Calu3 (cell line): ENCODE measurements at regions of chr1 and their contacts with region 1.

Region 1: DNA sequence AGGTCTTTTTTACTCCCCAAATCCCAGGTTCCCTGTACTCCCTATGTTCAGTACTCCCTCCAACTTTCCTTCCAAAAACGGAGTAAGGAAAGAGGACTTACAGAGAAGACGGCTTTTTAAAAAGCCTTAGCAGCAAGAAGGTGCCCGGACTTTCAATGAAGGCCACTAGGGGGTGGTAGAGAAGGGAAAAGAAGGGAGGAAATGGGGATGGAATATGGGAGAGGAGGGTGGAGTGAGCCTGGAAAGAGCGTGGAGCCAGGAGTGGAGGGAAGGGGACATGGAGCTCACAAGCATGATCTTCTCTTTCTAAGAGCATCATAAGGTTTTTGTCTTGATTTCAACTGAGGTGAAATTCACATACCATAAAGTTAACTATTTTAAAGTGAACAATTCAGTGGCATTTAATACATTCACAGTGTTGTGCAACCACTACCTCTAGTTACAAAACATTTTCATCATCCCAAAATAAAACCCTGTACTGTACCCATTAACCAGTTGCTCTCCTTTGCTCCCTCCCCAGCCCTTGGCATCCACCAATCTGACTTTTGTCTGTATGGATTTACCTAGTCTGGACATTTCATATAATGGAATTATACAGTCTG is 129.9 kb downstream of the ZNF281 start:
- DNase-seq: peak; percentile 76
- H3K4me3 Mint-ChIP-seq: no peak overlapping the region
- H3K27ac Mint-ChIP-seq: no peak overlapping the region
- H3K4me1 Mint-ChIP-seq: peaks cover 14% of the 10 kb centered on the region
- H3K27me3 Mint-ChIP-seq: no peaks in the 10 kb centered on the region
- CTCF ChIP-seq: peak; percentile 84

Region 2: DNA sequence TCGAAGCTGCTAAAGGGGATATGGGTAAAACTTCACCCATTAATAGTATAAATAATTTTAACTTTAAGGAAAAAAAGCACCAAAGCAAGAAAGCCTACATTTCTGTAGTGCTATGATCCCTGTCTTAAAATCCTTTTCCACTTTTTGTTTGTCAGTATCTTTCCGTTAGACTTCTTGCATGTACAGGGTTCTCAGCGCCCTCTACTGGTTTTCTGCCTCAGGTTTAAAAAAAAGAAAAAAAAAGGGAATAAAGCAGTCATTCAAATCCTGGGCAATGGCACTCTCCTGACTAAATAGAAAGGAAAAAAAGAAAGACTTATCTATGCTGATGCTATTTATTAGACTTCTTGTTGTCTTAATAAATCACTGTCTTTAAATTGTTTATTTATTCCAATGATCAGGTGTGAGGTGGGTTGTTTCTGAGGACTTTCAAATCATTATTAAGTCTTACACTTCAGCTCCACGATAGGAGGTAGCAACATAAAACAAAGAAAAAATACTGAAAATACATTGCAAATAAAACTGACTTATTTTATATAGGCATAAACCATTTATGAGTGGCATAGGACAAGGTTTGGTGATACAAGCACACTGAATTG is 727.8 kb before region 1 on chr1:
- CTCF ChIA-PET with region 1: no interaction called
- intact Hi-C with region 1: loop called (anchors 2 kb)
- DNase-seq: peak; percentile 72
- H3K4me3 Mint-ChIP-seq: no peak overlapping the region
- H3K27ac Mint-ChIP-seq: no peak overlapping the region
- H3K4me1 Mint-ChIP-seq: no peaks in the 10 kb centered on the region
- H3K27me3 Mint-ChIP-seq: no peaks in the 10 kb centered on the region
- CTCF ChIP-seq: peak; percentile 68

Region 3: GRCh38 chr1:199954699-199955098 is 325.2 kb before region 1 on chr1:
- CTCF ChIA-PET with region 1: interaction called, 6 read pairs
- intact Hi-C with region 1: loop called (anchors 1 kb)
- DNase-seq: peak; percentile 64
- H3K4me3 Mint-ChIP-seq: no peak overlapping the region
- H3K27ac Mint-ChIP-seq: peak overlapping the region; percentile 22
- H3K4me1 Mint-ChIP-seq: peaks cover 23% of the 10 kb centered on the region
- H3K27me3 Mint-ChIP-seq: no peaks in the 10 kb centered on the region
- CTCF ChIP-seq: peak; percentile 69

Region 4: DNA sequence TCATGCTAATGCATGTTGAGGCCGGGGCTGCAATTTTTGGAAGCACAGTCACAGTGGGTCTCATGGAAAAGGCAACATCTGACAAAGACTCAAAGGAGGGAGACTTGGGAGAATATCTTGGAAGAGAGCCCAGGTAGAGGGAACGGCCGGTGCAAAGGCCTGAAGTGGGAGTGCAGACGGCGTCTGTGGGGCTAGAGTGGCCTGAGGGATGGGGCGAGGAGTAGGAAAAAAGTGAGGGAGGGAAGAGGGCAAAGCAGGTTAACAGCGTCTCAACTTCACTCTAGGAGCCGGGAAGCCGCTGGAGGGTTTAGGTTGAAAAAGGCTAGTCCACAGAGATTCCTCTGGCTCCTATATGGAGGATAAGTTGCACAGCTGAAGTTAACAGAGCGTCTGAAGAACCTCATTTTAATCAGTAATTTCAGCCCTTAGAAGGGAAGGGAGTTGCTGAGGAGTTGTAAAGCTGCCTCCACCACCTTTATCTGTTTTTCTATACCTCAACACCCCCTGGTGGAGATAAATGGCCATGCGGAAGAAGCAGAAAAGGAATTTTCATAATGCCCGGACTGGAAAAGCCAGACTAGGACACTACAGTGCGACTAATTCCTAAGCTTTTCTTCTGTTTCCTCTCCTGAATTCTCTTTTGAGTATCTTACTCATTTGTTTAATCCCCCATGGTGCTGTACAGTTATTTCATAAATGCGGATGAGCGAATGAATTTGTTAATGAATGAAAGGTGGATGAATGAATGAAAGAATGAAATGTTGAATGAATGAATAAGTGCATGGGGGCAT is 208.7 kb after region 1 on chr1:
- CTCF ChIA-PET with region 1: interaction called, 10 read pairs
- intact Hi-C with region 1: loop called (anchors 1 kb)
- DNase-seq: peak; percentile 77
- H3K4me3 Mint-ChIP-seq: no peak overlapping the region
- H3K27ac Mint-ChIP-seq: peak overlapping the region; percentile 46
- H3K4me1 Mint-ChIP-seq: peaks cover 20% of the 10 kb centered on the region
- H3K27me3 Mint-ChIP-seq: no peaks in the 10 kb centered on the region
- CTCF ChIP-seq: peak; percentile 76